GM10248 (cell line): ENCODE measurements at regions of chr3 and their contacts with region 1.

Region 1: GRCh38 chr3:32467333-32468070 is 35.1 kb downstream of the CMTM6 start:
- DNase-seq: peak; percentile 85
- CTCF ChIP-seq: peak; percentile 99

Region 2: GRCh38 chr3:32296256-32297204 is 171.0 kb before region 1 on chr3:
- CTCF ChIA-PET with region 1: interaction called, 21 read pairs
- POLR2A ChIA-PET with region 1: no interaction called
- DNase-seq: peak; percentile 74
- CTCF ChIP-seq: peak; percentile 87

Region 3: GRCh38 chr3:32401556-32402081 is 65.9 kb before region 1 on chr3:
- CTCF ChIA-PET with region 1: interaction called, 10 read pairs
- POLR2A ChIA-PET with region 1: no interaction called
- DNase-seq: peak; percentile 65
- CTCF ChIP-seq: no peak

Region 4: GRCh38 chr3:32420126-32421038 is 47.1 kb before region 1 on chr3:
- CTCF ChIA-PET with region 1: interaction called, 76 read pairs
- POLR2A ChIA-PET with region 1: no interaction called
- DNase-seq: peak; percentile 78
- CTCF ChIP-seq: no peak

Region 5: GRCh38 chr3:32453346-32453745 is 14.2 kb before region 1 on chr3:
- CTCF ChIA-PET with region 1: interaction called, 104 read pairs
- POLR2A ChIA-PET with region 1: no interaction called
- DNase-seq: no peak
- CTCF ChIP-seq: no peak

Region 6: DNA sequence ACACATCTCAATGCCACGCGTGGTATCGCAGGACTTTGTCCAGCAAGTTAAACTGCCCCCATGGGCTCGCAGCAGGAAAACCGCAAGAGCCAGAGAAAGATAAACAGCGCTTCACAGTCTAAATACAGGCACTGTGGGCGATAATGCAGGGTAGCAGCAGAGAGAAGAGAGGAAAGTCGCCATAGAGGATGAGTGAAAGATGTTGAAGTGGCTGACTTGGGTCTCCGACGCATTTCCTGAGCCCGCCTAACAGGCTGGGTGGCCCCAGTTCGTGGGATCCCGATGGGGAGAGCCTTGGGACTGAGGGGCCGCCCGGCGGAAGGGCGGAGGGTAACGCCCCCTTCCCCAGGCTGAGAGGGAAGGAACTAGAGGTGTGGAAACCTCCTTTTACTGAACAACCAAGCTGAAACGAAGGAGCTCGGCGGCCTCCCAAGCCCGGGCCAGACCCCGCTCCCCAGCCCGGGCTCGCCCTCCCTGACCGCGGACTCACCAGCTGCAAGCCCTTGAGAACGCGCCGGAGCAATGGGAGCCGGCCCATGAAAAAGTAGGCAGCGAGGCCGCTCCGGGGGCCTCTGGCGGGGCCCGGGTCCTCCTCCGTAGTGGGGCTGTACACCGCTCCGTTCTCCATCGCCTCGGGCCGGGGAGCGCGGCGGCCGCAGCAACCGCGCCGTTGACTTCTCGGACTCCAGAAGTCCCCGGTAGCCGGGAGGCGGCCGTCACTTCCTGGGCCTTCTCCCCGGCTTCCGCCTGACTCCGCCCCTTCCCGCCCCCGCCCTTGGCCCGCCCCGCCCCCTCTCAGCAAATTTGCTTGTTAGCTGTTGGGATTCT is 34.8 kb after region 1 on chr3 and contains the start of gene CMTM6:
- CTCF ChIA-PET with region 1: interaction called, 24 read pairs
- POLR2A ChIA-PET with region 1: no interaction called
- DNase-seq: peak; percentile 94
- CTCF ChIP-seq: no peak